Sigmoid colon (tissue), 7 donors: ENCODE measurements at regions of chr9 and their contacts with region 1.

Region 1: GRCh38 chr9:16521868-16522411 is 348.5 kb downstream of the BNC2 start:
- DNase-seq: peak; percentile 73
- H3K4me3 ChIP-seq: no peak overlapping the region
- H3K27ac ChIP-seq: peak overlapping the region; percentile 80 to 85 (median 82)
- H3K4me1 ChIP-seq: peaks cover 0 to 54% (median 34%) of the 10 kb centered on the region in 4 donors
- H3K27me3 ChIP-seq: no peaks in the 10 kb centered on the region
- CTCF ChIP-seq: no peak
- EP300 ChIP-seq: no peak
- POLR2A ChIP-seq: no peak

Region 2: GRCh38 chr9:16202914-16203728 is 318.8 kb before region 1 on chr9:
- intact Hi-C with region 1: loop called (anchors 5 kb)
- DNase-seq: no peak
- H3K4me3 ChIP-seq: no peak overlapping the region
- H3K27ac ChIP-seq: peak overlapping the region in 3 of 4 donors; percentile 75 to 81 (median 76)
- H3K4me1 ChIP-seq: peaks cover 0 to 54% (median 32%) of the 10 kb centered on the region in 4 donors
- H3K27me3 ChIP-seq: no peaks in the 10 kb centered on the region
- CTCF ChIP-seq: no peak
- EP300 ChIP-seq: no peak
- POLR2A ChIP-seq: no peak

Region 3: GRCh38 chr9:16401701-16402100 is 120.2 kb before region 1 on chr9:
- intact Hi-C with region 1: no loop called
- DNase-seq: no peak
- H3K4me3 ChIP-seq: no peak overlapping the region
- H3K27ac ChIP-seq: no peak overlapping the region
- H3K4me1 ChIP-seq: no peaks in the 10 kb centered on the region
- H3K27me3 ChIP-seq: no peaks in the 10 kb centered on the region
- CTCF ChIP-seq: no peak
- EP300 ChIP-seq: no peak
- POLR2A ChIP-seq: no peak

Region 4: GRCh38 chr9:16559418-16560188 is 37.7 kb after region 1 on chr9:
- intact Hi-C with region 1: no loop called
- DNase-seq: no peak
- H3K4me3 ChIP-seq: no peak overlapping the region
- H3K27ac ChIP-seq: no peak overlapping the region
- H3K4me1 ChIP-seq: peaks cover 0 to 20% (median 17%) of the 10 kb centered on the region in 4 donors
- H3K27me3 ChIP-seq: no peaks in the 10 kb centered on the region
- CTCF ChIP-seq: no peak
- EP300 ChIP-seq: no peak
- POLR2A ChIP-seq: no peak

Region 5: DNA sequence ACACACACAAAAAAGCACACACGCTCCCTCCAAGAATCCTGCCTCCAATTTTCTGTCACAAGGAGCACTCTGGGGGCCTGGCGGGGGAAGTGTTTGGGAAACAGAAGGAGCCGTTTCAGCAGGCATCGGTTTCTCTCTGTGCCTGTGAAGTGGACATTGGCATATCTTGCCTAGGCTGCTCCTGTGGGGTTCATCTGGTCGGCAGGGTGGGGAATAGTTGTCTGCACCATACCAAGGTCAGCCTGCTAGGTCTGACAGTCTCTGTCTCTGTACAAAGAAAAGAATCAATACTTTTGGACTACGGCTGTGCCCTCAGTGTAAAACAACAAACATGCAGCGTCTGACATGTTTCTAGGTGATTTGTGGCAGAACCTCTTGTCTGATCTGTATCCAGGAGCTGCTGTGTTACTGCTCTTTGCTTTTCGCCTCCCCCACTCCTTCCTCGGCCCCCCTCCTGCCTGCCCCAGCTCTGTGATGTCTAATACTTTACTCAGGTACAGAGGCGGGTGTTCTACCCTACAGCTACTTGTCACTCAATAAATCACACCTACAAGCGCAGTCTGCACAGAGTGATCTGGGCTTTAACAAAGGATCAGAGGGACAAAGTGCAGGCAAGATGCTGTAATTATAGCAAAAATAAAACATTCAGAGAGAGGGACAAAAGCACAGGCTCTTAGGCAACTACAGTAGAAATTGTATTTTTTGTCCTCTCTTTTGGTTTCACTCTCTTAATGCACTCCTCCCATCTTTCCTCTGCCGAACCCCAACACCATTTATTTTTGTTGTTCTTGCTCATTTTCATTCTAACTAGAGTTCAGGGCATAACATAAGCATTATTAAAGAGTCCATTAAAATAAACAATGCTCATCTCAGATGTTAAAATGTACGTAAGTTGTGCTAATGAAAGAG is 131.8 kb after region 1 on chr9:
- intact Hi-C with region 1: loop called (anchors 5 kb)
- DNase-seq: peak; percentile 76
- H3K4me3 ChIP-seq: peak overlapping the region; percentile 5 to 37 (median 34)
- H3K27ac ChIP-seq: peak overlapping the region; percentile 7 to 83 (median 80)
- H3K4me1 ChIP-seq: peaks cover 0 to 76% (median 54%) of the 10 kb centered on the region in 4 donors
- H3K27me3 ChIP-seq: no peaks in the 10 kb centered on the region
- CTCF ChIP-seq: no peak
- EP300 ChIP-seq: no peak
- POLR2A ChIP-seq: no peak